Activated B cell treated with CpG ODN at 0.5 μM for 24 hours (primary cell): ENCODE measurements at regions of chr6 and their contacts with region 1.

Region 1: GRCh38 chr6:27864906-27865849 is 47.0 kb downstream of the OR2B2 start:
- DNase-seq: peak; percentile 68
- ATAC-seq: peak; percentile 85
- H3K4me3 Mint-ChIP-seq: peak overlapping the region; percentile 98
- H3K27ac Mint-ChIP-seq: peak overlapping the region; percentile 99
- H3K4me1 Mint-ChIP-seq: peaks cover 48% of the 10 kb centered on the region
- H3K27me3 Mint-ChIP-seq: no peaks in the 10 kb centered on the region
- CTCF ChIP-seq: no peak

Region 2: DNA sequence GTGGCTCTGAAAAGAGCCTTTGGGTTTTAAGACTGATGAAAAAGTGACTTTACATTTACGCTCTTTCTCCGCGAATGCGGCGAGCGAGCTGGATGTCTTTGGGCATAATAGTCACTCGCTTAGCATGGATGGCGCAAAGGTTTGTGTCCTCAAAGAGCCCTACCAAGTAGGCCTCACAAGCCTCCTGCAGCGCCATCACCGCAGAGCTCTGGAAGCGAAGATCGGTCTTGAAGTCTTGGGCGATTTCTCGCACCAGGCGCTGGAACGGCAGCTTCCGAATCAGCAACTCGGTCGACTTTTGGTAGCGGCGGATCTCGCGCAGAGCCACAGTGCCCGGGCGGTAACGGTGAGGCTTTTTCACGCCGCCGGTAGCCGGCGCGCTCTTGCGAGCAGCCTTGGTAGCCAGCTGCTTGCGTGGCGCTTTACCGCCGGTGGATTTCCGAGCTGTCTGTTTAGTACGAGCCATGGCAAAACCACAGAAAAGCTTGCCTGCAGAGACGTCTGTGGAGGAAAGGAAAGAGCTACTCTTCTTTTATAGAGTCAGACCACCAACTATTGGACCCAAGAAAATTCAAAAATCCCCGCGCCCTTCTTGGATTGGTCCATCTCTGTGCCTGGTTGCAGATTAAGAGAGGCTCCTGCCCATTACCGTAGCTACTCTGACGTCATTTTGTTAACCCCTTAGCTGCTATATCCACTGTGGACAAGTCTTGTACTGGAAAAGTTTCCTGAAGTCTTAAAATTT is 1833.4 kb before region 1 on chr6:
- CTCF ChIA-PET with region 1: no interaction called
- POLR2A ChIA-PET with region 1: interaction called, 34 read pairs
- intact Hi-C with region 1: no loop called
- DNase-seq: peak; percentile 55
- ATAC-seq: peak; percentile 62
- H3K4me3 Mint-ChIP-seq: peak overlapping the region; percentile 93
- H3K27ac Mint-ChIP-seq: peak overlapping the region; percentile 98
- H3K4me1 Mint-ChIP-seq: peaks cover 40% of the 10 kb centered on the region
- H3K27me3 Mint-ChIP-seq: peaks cover 2% of the 10 kb centered on the region
- CTCF ChIP-seq: no peak

Region 3: DNA sequence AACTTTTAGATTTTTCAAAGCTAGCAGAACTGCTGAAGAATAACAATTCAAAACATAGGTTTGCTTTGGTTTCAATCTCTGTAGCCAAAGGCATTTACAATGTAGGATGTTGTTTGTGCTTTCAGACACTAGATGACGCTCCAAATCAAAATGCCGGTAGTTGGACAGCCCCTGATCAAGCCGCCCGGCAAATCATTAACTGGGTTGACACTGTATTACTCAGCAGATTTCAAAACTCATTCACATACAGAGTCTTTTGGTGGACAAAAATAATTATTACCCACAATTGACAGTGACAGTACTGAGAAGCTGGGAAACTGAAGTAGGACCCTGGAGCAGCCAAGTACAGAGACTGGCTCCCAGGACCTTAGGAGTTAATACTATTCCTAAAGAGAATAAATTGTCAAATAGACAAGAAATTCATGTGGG is 1799.2 kb before region 1 on chr6:
- CTCF ChIA-PET with region 1: no interaction called
- POLR2A ChIA-PET with region 1: interaction called, 14 read pairs
- intact Hi-C with region 1: no loop called
- DNase-seq: no peak
- ATAC-seq: peak; percentile 97
- H3K4me3 Mint-ChIP-seq: no peak overlapping the region
- H3K27ac Mint-ChIP-seq: peak overlapping the region; percentile 35
- H3K4me1 Mint-ChIP-seq: peaks cover 8% of the 10 kb centered on the region
- H3K27me3 Mint-ChIP-seq: peaks cover 3% of the 10 kb centered on the region
- CTCF ChIP-seq: peak; percentile 39

Region 4: DNA sequence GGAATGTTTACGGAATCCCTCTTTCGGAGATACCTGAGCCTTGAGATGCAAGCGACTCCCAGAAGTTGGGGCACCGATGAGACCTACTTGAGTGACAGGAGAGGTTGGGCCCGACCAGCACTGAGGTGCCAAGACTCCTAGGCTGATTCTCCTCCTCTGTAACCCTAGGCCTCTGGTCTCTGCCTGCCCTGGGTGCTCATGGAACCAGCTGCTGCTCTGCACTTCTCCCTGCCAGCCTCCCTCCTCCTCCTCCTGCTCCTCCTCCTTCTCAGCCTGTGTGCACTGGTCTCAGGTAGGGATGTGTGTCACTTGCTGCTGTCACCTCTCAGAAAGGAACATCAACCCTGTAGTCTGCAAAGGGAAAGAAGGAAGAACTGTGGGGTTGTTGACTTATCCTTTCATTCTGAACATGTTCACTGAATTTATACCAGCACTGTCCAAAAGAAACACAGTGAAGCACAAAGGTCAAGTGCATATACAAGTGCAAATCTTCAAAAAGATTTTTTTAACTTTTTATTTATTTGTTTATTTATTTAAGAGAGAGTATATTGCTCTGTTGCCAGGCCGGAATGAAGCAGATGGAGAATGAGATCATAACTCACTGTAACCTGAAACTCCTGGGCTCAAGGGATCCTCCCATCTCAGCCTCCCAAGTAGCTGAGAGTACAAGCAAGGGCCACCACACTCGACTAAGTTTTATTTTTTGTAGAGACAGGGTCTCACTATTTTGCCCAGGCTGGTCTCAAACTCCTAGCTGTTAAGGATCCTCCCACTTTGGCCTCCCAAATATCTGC is 1481.4 kb before region 1 on chr6:
- CTCF ChIA-PET with region 1: no interaction called
- POLR2A ChIA-PET with region 1: interaction called, 11 read pairs
- intact Hi-C with region 1: no loop called
- DNase-seq: no peak
- ATAC-seq: peak; percentile 16
- H3K4me3 Mint-ChIP-seq: peak overlapping the region; percentile 97
- H3K27ac Mint-ChIP-seq: peak overlapping the region; percentile 94
- H3K4me1 Mint-ChIP-seq: peaks cover 66% of the 10 kb centered on the region
- H3K27me3 Mint-ChIP-seq: no peaks in the 10 kb centered on the region
- CTCF ChIP-seq: no peak

Region 5: DNA sequence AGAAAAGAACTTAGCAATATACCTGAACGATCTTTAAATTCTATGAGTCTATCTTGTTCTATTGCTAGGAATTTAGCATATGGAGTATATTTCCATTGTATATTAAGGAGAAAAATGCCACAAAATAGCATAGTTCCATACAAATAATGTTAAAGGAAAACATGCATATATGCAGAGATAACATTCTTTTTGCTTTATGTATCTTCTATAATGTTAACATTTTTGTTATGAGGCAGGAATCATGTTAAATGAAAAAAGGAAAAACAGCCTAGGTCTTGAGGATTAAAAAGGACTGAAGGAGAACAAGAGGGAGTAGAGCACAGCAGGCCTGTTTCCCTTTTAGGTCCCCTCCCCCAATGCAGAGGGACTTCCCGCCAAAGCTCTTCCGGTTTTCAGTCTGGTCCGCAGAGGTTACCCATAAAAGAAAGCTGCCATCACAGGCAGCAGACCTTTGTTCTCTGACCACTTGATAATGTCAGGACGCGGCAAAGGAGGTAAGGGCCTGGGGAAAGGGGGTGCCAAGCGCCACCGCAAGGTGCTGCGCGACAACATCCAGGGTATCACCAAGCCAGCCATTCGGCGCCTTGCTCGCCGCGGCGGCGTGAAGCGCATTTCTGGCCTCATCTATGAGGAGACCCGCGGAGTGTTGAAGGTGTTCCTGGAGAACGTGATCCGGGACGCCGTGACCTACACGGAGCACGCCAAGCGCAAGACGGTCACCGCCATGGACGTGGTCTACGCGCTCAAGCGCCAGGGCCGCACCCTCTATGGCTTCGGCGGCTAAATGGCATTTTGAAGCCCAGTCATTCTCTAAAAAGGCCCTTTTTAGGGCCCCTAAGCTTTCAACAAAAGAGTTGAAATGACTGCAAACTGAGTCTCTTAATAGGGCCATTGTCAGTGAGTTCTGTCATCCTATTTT is 726.1 kb before region 1 on chr6:
- CTCF ChIA-PET with region 1: no interaction called
- POLR2A ChIA-PET with region 1: interaction called, 156 read pairs
- intact Hi-C with region 1: no loop called
- DNase-seq: peak; percentile 59
- ATAC-seq: peak; percentile 82
- H3K4me3 Mint-ChIP-seq: peak overlapping the region; percentile 97
- H3K27ac Mint-ChIP-seq: peak overlapping the region; percentile 98
- H3K4me1 Mint-ChIP-seq: peaks cover 62% of the 10 kb centered on the region
- H3K27me3 Mint-ChIP-seq: no peaks in the 10 kb centered on the region
- CTCF ChIP-seq: no peak

Region 6: GRCh38 chr6:27809939-27810767 is 55.0 kb before region 1 on chr6:
- CTCF ChIA-PET with region 1: no interaction called
- POLR2A ChIA-PET with region 1: interaction called, 149 read pairs
- intact Hi-C with region 1: loop called (anchors 1 kb)
- DNase-seq: peak; percentile 68
- ATAC-seq: peak; percentile 59
- H3K4me3 Mint-ChIP-seq: peak overlapping the region; percentile 93
- H3K27ac Mint-ChIP-seq: peak overlapping the region; percentile 97
- H3K4me1 Mint-ChIP-seq: peaks cover 59% of the 10 kb centered on the region
- H3K27me3 Mint-ChIP-seq: no peaks in the 10 kb centered on the region
- CTCF ChIP-seq: no peak

Region 7: DNA sequence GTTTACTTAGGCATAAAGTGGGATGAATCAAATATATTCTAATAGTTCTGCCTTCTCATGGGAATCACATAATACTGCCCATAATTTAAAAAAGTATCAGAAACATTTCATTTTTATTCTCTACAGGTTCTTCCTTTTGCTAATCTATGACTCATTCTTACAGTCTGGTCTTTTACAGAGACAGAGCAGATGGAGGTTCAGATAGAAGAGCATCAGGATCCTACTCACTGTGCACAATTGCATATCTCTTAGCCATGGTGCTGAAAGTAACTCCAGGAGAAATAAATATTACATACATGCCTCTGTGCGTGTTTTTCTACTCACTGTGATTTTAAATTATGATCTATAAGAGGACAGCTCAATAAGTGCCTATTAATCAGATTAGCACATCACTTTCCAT is 75.6 kb after region 1 on chr6:
- CTCF ChIA-PET with region 1: no interaction called
- POLR2A ChIA-PET with region 1: no interaction called
- intact Hi-C with region 1: no loop called
- DNase-seq: no peak
- ATAC-seq: no peak
- H3K4me3 Mint-ChIP-seq: no peak overlapping the region
- H3K27ac Mint-ChIP-seq: no peak overlapping the region
- H3K4me1 Mint-ChIP-seq: no peaks in the 10 kb centered on the region
- H3K27me3 Mint-ChIP-seq: peaks cover 14% of the 10 kb centered on the region
- CTCF ChIP-seq: no peak

Region 8: GRCh38 chr6:28218271-28219248 is 353.4 kb after region 1 on chr6:
- CTCF ChIA-PET with region 1: no interaction called
- POLR2A ChIA-PET with region 1: interaction called, 13 read pairs
- intact Hi-C with region 1: no loop called
- DNase-seq: peak; percentile 44
- ATAC-seq: peak; percentile 82
- H3K4me3 Mint-ChIP-seq: peak overlapping the region; percentile 89
- H3K27ac Mint-ChIP-seq: no peak overlapping the region
- H3K4me1 Mint-ChIP-seq: peaks cover 13% of the 10 kb centered on the region
- H3K27me3 Mint-ChIP-seq: peaks cover 54% of the 10 kb centered on the region
- CTCF ChIP-seq: no peak